Heart right ventricle (tissue), 16 donors: ENCODE measurements at regions of chr10 and their contacts with region 1.

Region 1: GRCh38 chr10:132223156-132223590 is 36.4 kb downstream of the DPYSL4 start:
- DNase-seq: peak; percentile 80
- ATAC-seq: peak; percentile 87 to 97 (median 95)
- H3K4me3 ChIP-seq: no peak overlapping the region
- H3K27ac ChIP-seq: no peak overlapping the region
- H3K4me1 ChIP-seq: peaks cover 0 to 27% (median 0%) of the 10 kb centered on the region in 9 donors
- H3K27me3 ChIP-seq: no peaks in the 10 kb centered on the region
- CTCF ChIP-seq: peak; percentile 83 to 97 (median 93)

Region 2: GRCh38 chr10:132354356-132355094 is 131.4 kb after region 1 on chr10:
- intact Hi-C with region 1: loop called (anchors 1 to 5 kb)
- DNase-seq: no peak
- ATAC-seq: no peak
- H3K4me3 ChIP-seq: no peak overlapping the region
- H3K27ac ChIP-seq: no peak overlapping the region
- H3K4me1 ChIP-seq: peaks cover 0 to 3% (median 0%) of the 10 kb centered on the region in 9 donors
- H3K27me3 ChIP-seq: no peaks in the 10 kb centered on the region
- CTCF ChIP-seq: no peak

Region 3: GRCh38 chr10:132446661-132447194 is 223.6 kb after region 1 on chr10:
- intact Hi-C with region 1: loop called in 7 of 10 experiments (anchors 5 to 10 kb)
- DNase-seq: no peak
- ATAC-seq: peak; percentile 59 to 77 (median 69)
- H3K4me3 ChIP-seq: peak overlapping the region in 1 of 10 donors; percentile 24
- H3K27ac ChIP-seq: peak overlapping the region in 3 of 10 donors; percentile 44 to 92 (median 63)
- H3K4me1 ChIP-seq: peaks cover 0 to 40% (median 16%) of the 10 kb centered on the region in 9 donors
- H3K27me3 ChIP-seq: no peaks in the 10 kb centered on the region
- CTCF ChIP-seq: peak in 8 of 9 donors; percentile 14 to 59 (median 44)

Region 4: DNA sequence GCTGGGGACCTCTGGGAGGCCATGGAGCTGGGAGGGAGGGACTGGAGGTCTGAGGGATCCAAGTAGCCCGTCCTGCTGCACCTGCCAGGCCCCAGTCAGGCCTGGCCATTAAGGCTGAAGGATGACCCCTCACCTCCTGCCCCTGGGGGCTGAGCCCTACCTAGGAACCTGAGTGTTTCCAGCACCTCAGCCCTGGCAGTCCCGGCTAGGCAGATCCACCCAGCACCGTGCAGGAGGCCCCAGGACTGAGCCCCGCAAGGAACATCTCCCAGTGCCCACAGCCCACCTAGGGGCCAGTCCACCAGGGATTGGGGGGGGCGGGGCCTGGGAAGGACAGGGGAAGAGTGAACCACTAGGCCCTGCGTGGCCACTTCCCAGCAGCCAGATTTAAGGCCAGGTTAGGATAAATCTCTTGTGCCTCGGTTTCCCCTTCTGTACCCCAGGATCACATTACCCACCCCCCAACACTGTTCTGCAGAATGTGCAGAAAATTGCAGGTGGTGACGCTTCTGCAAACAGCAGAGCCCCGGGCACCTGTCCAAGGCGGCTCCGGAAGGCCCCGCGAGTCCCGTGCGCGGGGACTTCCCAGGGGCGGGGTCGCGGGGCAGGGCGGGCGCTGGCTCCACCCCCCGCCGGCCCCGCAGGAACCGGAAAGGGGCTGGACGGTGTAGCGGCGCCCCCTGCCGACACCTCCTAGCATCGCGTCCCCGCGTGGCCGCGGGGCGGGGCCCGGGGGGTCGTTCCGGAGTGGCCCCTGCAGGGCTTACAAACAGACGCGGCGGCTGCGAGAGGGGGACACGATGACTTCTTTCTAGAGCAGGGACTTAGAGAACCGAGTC is 229.7 kb after region 1 on chr10:
- intact Hi-C with region 1: loop called (anchors 2 to 10 kb)
- DNase-seq: peak; percentile 79 to 88
- ATAC-seq: peak; percentile 76 to 90 (median 85)
- H3K4me3 ChIP-seq: peak overlapping the region in 8 of 10 donors; percentile 10 to 37 (median 22)
- H3K27ac ChIP-seq: peak overlapping the region in 2 of 10 donors; percentile 15 to 48
- H3K4me1 ChIP-seq: peaks cover 7 to 22% (median 18%) of the 10 kb centered on the region in 9 donors
- H3K27me3 ChIP-seq: peaks cover 0 to 8% (median 3%) of the 10 kb centered on the region in 7 donors
- CTCF ChIP-seq: peak; percentile 90 to 98 (median 97)

Region 5: DNA sequence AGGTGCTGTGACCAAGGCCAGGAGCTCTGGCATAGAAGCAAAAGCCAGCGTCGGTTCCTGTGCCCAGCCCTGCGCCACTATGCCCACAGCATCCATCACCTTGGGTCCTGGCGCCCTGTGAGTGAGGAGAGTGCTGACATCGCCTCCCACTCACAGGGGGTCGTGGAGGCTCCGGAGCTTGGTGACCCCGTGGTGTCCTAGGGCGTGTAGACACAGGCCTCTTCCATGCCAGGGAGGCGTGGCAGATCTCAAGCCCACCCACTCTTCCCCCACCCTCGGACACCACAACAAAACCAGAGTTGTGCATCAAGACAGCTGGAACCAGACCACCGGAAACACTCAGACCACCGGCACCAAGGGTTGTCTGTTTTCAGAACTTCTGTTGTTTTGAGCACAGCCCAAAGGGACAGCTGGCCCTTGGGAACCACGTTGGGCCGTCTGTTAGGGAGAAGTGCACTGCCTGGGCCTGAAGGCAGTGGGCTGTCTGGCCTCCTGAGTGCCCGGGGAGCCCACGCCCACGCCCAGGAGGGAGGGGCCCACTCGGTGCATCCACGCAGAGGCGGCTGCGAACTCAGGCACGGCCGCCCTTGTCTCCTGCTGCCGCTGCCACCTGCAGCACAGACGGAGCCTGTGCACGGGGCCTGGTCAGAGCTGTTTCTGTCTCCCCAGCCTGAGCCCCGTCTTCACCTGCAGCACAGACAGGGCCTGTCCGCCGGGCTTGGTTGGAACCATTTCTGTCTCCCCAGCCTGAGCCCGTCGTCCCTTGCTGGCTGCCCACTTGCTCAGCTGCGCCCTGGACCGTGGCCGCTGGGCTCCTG is 420.7 kb after region 1 on chr10:
- intact Hi-C with region 1: loop called in 2 of 10 experiments (anchors 10 kb)
- DNase-seq: no peak
- ATAC-seq: peak in 2 of 8 donors; percentile 26
- H3K4me3 ChIP-seq: no peak overlapping the region
- H3K27ac ChIP-seq: no peak overlapping the region
- H3K4me1 ChIP-seq: peaks cover 0 to 16% (median 0%) of the 10 kb centered on the region in 9 donors
- H3K27me3 ChIP-seq: no peaks in the 10 kb centered on the region
- CTCF ChIP-seq: no peak